Activated T-helper 2 cell treated with anti-CD3 and anti-CD28 coated beads, Interferon-gamma antibody, Interleukin-2, Interleukin-4, amounts not matched to agents 10 μg/mL and 5 μg/mL and 100 μg/mL, durations not matched to agents 14 hours and 24 hours and 36 hours (primary cell): ENCODE measurements at regions of chr2 and their contacts with region 1.

Region 1: DNA sequence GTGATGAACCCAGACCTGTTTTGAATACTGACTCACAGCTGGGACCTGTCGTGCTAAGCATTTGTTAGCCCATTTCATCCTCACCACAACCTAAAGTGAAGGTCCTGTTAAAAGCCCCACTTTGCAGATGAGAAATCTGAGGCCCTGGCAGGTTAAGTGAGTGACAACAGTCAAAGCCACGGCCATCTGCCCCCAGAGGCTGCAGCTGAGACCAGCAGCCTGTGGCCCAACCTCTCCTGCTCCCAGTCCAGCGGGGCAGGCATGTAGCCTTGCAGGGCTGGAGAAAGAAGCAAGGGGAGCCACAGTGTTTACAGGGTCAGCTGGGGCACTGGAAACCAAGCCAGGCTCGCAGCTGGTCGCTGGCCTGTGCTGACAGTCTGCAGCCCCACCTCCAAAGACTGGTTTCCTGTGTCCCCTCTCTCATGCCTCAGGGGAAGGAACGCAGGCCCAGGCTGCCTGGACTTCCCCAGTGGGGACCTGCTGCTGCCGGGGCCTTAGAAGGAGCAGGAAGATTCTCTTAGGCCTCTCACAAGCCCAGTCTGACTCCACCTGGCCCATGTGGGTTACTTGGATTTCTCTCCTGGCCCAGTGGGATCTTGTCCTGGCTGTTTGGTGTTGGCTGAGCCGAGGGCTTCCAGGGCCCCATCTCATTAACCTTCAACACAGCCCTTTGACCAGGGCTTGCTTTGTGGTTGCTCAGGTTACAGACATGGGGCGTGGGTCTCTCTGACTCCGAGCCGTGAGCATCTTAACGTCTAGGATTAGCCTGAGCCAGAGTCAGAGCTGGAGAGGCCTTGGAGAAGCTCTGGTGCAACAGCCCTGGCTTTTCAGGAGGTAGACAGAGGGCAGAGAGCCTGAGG is 1.7 kb downstream of the INPP5D start:
- DNase-seq: peak; percentile 23
- H3K4me3 Mint-ChIP-seq: peak overlapping the region; percentile 91
- H3K27ac Mint-ChIP-seq: peak overlapping the region; percentile 88
- H3K4me1 Mint-ChIP-seq: peaks cover 38% of the 10 kb centered on the region
- H3K27me3 Mint-ChIP-seq: no peaks in the 10 kb centered on the region

Region 2: DNA sequence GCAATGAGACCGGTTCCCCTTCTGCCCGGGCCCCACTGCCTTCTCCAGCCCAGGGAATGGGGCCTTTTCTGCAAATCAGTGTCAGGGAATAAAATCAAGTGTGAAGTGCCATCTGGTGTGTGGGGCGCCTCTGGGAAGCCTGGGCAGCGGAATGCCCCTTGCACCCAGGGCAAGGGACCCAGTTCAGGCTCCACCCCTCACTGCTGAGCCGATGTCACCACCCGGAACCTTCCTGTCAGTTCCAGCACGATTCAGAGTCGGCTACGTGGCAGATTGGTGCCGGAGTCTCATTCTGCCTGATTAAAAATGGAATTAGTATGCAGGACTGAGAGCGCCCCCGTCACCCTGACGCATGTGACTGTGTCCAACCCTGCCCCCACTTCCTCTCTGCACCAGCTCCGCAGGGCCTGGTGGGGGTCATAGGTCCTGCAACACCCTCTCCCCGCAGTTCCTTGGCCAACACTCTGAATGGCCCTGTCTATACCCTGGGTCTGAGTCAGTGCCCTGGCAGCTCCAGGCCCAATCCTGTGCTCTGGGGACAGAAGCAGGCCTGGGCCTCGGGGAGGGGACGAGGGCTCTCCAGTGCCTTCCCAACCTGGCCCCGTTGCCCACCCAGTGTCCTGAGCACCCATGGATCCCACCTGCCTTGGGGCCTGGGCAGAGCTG is 614.0 kb before region 1 on chr2:
- intact Hi-C with region 1: no loop called
- DNase-seq: no peak
- H3K4me3 Mint-ChIP-seq: no peak overlapping the region
- H3K27ac Mint-ChIP-seq: no peak overlapping the region
- H3K4me1 Mint-ChIP-seq: no peaks in the 10 kb centered on the region
- H3K27me3 Mint-ChIP-seq: no peaks in the 10 kb centered on the region

Region 3: GRCh38 chr2:232697100-232697865 is 364.5 kb before region 1 on chr2 and contains the start of gene GIGYF2:
- intact Hi-C with region 1: loop called (anchors 5 kb)
- DNase-seq: peak; percentile 89
- H3K4me3 Mint-ChIP-seq: peak within 1 kb of the TSS; percentile 98
- H3K27ac Mint-ChIP-seq: peak within 1 kb of the TSS; percentile 81
- H3K4me1 Mint-ChIP-seq: peaks cover 30% of the 10 kb centered on the region
- H3K27me3 Mint-ChIP-seq: peaks cover 5% of the 10 kb centered on the region
- total RNA-seq, gene GIGYF2: 63.7 and 64.7 TPM in 2 replicates

Region 4: GRCh38 chr2:232890896-232891601 is 170.8 kb before region 1 on chr2:
- intact Hi-C with region 1: loop called (anchors 10 kb)
- DNase-seq: no peak
- H3K4me3 Mint-ChIP-seq: no peak overlapping the region
- H3K27ac Mint-ChIP-seq: no peak overlapping the region
- H3K4me1 Mint-ChIP-seq: peaks cover 5% of the 10 kb centered on the region
- H3K27me3 Mint-ChIP-seq: no peaks in the 10 kb centered on the region

Region 5: DNA sequence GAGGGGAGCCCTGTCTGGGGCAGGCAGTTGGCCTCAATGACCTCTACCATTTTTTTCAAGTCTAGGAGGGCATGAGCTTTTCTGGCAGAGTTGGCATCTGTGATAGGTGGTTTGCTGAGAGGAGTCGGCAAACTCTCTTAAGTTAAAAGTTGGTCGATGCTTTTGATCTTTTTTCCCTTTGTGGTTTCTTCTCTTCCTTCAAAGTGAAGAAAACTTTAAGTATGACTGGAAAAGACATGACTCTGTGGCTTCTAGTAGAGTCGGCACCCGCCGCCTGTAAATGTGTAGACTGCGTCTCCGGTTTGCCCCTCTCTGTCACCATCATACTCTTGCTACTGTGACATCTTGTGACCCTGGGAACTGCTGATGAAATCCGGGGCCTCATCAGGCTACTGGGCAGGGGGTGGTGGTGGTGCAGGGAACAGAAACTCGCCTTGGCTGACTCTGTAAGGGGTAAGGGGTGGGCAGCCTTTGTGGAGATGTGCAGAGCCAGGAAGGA is 19.5 kb after region 1 on chr2:
- intact Hi-C with region 1: loop called (anchors 1 kb)
- DNase-seq: peak; percentile 58
- H3K4me3 Mint-ChIP-seq: peak overlapping the region; percentile 55
- H3K27ac Mint-ChIP-seq: peak overlapping the region; percentile 82
- H3K4me1 Mint-ChIP-seq: peaks cover 70% of the 10 kb centered on the region
- H3K27me3 Mint-ChIP-seq: no peaks in the 10 kb centered on the region

Region 6: DNA sequence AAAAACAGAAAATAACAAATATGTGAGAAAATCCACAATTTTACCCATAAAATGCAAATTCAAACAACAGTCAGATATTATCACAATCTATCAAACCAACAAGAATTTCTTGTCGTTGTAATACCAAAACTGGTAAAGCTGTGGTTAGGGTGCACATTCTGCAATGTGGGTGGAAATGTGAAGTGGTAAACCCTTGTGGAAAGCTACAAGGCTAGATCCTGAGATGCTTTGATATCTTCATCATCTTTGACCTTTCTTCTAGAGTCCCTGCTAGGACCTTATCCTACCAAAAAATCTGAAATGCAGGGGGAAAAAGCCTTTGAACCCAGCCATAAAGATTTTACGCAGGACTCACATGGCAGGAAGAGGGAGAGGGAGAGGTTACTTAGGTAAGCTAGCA is 172.4 kb after region 1 on chr2:
- intact Hi-C with region 1: loop called (anchors 2 kb)
- DNase-seq: peak; percentile 32
- H3K4me3 Mint-ChIP-seq: peak overlapping the region; percentile 62
- H3K27ac Mint-ChIP-seq: peak overlapping the region; percentile 92
- H3K4me1 Mint-ChIP-seq: peaks cover 62% of the 10 kb centered on the region
- H3K27me3 Mint-ChIP-seq: no peaks in the 10 kb centered on the region

Region 7: DNA sequence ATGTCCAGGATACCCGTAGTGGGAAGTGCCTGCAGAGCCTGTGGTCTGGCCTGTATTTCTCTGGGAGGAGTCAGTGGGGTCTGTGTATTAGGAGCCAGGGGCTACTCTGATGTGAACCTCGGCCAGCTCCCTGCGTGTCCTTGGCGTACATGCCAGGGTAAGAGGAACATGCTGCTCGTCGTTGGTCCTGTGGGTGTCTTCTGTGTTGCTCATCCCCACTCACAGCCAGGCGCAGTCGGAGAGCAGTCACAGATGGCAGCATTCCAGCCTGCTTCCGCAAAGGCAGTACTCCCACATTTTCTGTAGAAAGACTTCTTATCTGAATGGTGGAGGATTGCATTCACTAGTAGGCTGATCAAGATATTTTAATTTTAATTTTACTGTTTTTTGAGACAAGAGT is 377.4 kb after region 1 on chr2:
- intact Hi-C with region 1: no loop called
- DNase-seq: no peak
- H3K4me3 Mint-ChIP-seq: no peak overlapping the region
- H3K27ac Mint-ChIP-seq: no peak overlapping the region
- H3K4me1 Mint-ChIP-seq: peaks cover 6% of the 10 kb centered on the region
- H3K27me3 Mint-ChIP-seq: no peaks in the 10 kb centered on the region